ENCODE measurements at regions of chr15 and their contacts with region 1.

Region 1: GRCh38 chr15:40906091-40906990 is 12.1 kb downstream of the VPS18 start:
- DNase-seq: peak; percentile 89
- ATAC-seq: peak; percentile 86

Region 2: DNA sequence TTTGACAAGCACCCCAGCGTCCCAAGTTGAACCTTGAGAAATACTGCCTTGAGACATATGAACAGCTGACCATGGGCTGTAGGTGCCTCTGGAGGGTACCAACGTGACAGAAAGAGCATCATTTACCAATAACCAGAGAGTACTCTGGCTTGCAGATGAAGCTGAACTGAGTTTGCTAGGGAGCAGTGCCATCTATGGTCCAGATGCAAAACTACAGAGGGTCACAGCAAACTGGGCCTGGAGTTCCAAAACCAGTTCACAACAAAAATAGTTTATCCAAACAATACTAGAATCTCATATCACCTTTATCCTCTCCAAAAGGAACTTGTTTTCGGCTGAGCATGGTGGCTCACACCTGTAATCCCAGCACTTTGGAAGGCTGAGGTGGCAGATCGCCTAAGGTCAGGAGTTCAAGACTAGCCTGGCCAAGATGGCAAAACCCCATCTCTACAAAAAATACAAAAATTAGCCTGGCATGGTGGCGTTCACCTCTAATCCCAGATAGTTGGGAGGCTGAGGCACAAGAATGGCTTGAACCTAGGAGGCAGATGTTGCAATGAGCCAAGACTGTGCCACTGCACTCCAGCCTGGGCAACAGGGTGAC is 116.2 kb after region 1 on chr15:
- intact Hi-C with region 1: loop called (anchors 5 kb)
- DNase-seq: no peak
- ATAC-seq: peak; percentile 63

Region 3: GRCh38 chr15:41180206-41180789 is 274.0 kb after region 1 on chr15:
- intact Hi-C with region 1: loop called (anchors 10 kb)
- DNase-seq: no peak
- ATAC-seq: no peak